ENCODE measurements at regions of chr11 and their contacts with region 1.

Region 1: DNA sequence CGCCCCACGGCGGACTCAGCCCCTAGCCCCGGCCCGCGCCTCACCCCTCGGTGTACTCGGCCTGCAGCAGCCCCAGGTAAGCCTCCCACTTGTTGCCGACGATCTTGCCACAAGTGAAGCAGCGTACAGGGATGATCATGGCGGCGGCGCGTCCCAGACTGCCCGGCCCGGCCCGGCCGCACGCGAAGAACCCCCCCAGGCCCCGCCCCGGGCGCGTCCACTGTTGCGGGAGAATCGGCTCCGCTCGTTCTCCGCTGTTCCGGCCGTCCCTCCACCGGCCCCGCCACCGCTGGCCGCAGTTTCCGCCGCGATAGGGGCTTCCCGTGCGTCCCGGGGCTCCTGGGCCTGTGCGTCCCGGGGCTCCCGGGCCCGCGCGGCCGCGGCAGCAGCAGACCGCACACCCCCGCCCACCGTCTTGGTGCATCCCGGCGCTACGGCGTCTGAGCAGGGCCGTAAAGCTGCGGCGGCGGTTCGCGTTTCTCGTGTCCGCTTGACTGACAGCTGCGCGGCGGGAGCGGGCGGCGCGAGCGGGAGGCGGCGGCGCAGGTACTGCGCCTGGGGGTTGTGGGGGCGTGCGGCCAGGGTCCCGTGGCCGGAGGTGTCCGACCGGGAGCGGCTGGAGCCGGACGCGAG is at the starts of genes POLR2L and TSPAN4:
- DNase-seq: peak; percentile 94
- ATAC-seq: peak; percentile 80
- H3K4me3 Mint-ChIP-seq: peak within 1 kb of the TSS; percentile 84
- H3K27ac Mint-ChIP-seq: peak within 1 kb of the TSS; percentile 87
- H3K4me1 Mint-ChIP-seq: peaks cover 22% of the 10 kb centered on the region
- H3K27me3 Mint-ChIP-seq: peaks cover 4% of the 10 kb centered on the region
- total RNA-seq, gene POLR2L: 74.6 to 79.4 TPM
- total RNA-seq, gene TSPAN4: 5.2 to 6.0 TPM

Region 2: DNA sequence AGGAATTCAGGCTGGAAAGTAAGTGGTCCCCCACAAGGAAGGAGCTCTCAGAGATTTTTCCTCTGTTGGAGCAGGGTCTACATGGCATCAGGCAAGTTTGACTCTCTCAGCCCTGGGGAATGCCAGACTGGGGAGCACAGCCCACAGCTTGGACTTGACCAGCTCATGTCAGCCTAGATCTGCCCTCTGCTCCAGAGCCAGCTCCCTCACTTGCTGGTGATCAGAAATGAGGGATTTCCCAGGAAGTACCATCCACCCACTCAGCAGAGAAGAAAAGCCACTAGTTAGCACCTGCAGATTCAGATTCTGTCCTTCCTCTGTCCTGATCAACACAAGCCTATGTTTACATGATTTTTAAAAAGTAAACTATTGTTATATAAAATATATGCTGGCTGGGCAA is 82.2 kb before region 1 on chr11:
- CTCF ChIA-PET with region 1: no interaction called
- POLR2A ChIA-PET with region 1: no interaction called
- intact Hi-C with region 1: no loop called
- DNase-seq: no peak
- ATAC-seq: no peak
- H3K4me3 Mint-ChIP-seq: no peak overlapping the region
- H3K27ac Mint-ChIP-seq: no peak overlapping the region
- H3K4me1 Mint-ChIP-seq: peaks cover 7% of the 10 kb centered on the region
- H3K27me3 Mint-ChIP-seq: no peaks in the 10 kb centered on the region

Region 3: GRCh38 chr11:777288-778255 is 64.9 kb before region 1 on chr11 and contains the start of gene GATD1:
- CTCF ChIA-PET with region 1: no interaction called
- POLR2A ChIA-PET with region 1: no interaction called
- intact Hi-C with region 1: loop called in 1 of 2 experiments (anchors 1 kb)
- DNase-seq: peak; percentile 97
- ATAC-seq: peak; percentile 91
- H3K4me3 Mint-ChIP-seq: peak within 1 kb of the TSS; percentile 89
- H3K27ac Mint-ChIP-seq: peak within 1 kb of the TSS; percentile 82
- H3K4me1 Mint-ChIP-seq: peaks cover 20% of the 10 kb centered on the region
- H3K27me3 Mint-ChIP-seq: no peaks in the 10 kb centered on the region
- total RNA-seq, gene GATD1: 45.7 to 59.8 TPM

Region 4: GRCh38 chr11:809287-810039 is 33.0 kb before region 1 on chr11 and contains the start of gene RPLP2:
- CTCF ChIA-PET with region 1: interaction called, 3 read pairs
- POLR2A ChIA-PET with region 1: no interaction called
- intact Hi-C with region 1: loop called (anchors 1 to 2 kb)
- DNase-seq: peak; percentile 99
- ATAC-seq: peak; percentile 86
- H3K4me3 Mint-ChIP-seq: peak within 1 kb of the TSS; percentile 94
- H3K27ac Mint-ChIP-seq: peak within 1 kb of the TSS; percentile 97
- H3K4me1 Mint-ChIP-seq: peaks cover 30% of the 10 kb centered on the region
- H3K27me3 Mint-ChIP-seq: no peaks in the 10 kb centered on the region
- total RNA-seq, gene RPLP2: 2,132 to 3,230 TPM

Region 5: DNA sequence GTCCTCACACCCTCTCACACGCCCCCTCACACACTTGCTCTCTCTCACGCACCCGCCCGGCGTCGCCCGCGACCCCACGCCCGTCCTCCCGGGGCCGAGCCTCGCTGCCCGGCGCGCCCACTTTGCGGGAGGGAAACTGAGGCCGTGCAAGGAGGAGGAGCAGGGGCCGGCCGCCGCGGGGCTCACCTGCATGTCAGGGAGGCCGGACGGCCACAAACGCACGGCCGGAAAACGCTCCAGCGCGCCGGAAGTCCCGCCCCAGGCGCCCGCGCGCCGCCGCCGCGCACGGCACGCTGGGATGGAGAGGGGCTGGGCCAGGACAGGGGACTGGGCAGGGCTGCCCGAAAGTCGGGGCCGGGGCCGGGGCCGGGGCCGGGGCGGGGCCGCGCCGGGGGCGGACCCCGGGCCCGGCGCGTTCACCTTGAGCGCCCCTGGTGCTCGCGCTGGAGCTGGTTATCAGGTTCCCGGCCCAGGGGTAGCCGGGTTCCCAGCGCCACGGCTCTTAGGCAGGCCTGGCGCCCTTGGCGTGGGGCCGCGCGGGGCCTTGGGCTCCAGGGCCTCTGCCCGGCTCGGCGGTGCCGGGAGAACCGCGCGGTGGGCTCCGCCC is 68.2 kb after region 1 on chr11 and contains the start of gene CHID1:
- CTCF ChIA-PET with region 1: no interaction called
- POLR2A ChIA-PET with region 1: no interaction called
- intact Hi-C with region 1: loop called (anchors 1 to 5 kb)
- DNase-seq: peak; percentile 92
- ATAC-seq: peak; percentile 98
- H3K4me3 Mint-ChIP-seq: peak within 1 kb of the TSS; percentile 88
- H3K27ac Mint-ChIP-seq: peak within 1 kb of the TSS; percentile 88
- H3K4me1 Mint-ChIP-seq: peaks cover 24% of the 10 kb centered on the region
- H3K27me3 Mint-ChIP-seq: no peaks in the 10 kb centered on the region
- total RNA-seq, gene CHID1: 60.4 to 75.3 TPM

Region 6: GRCh38 chr11:1389103-1389931 is 546.8 kb after region 1 on chr11:
- CTCF ChIA-PET with region 1: no interaction called
- POLR2A ChIA-PET with region 1: no interaction called
- intact Hi-C with region 1: loop called in 1 of 2 experiments (anchors 10 kb)
- DNase-seq: peak; percentile 99
- ATAC-seq: peak; percentile 99
- H3K4me3 Mint-ChIP-seq: peak overlapping the region; percentile 53
- H3K27ac Mint-ChIP-seq: no peak overlapping the region
- H3K4me1 Mint-ChIP-seq: peaks cover 9% of the 10 kb centered on the region
- H3K27me3 Mint-ChIP-seq: peaks cover 25% of the 10 kb centered on the region

Region 7: DNA sequence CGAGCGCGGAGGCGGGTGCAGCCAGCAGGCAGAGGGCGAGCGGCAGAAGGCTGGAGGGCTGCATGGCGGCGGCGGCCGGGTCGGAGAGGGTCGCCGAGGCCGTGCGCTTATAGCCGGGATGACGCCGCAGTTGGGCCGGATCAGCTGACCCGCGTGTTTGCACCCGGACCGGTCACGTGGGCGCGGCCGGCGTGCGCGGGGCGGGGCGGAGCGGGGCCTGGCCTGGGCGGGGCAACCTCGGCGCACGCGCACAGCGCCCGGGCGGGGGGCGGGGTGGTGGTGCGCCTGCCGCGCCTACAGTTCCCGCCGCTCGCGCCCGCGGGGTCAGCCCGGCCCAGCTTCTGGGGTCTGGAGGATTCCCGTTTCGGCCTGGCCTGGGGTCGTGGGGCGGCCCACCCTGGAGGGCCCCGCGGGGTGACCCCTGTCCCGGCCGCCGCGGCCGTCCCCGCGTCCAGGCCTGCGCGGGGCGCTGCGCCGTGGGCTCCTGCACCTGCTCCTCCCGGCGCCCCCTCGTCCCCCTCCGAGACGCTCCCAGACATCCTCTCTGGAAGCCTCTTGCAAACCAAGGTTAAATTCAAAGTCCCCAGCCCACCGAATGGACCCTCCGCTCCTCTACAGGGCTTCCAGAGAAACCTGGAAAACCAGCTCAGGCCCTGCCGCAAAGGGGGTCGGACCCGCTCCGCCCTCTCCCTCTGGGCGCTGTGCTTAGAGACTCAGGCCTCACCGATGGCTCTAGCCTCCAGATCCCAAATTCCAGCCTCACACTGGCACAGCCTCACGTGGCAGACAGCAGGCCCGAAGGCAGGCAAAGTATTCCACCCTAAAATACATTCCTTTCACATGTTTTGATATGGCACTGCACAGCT is 921.5 kb after region 1 on chr11 and contains the start of gene CTSD:
- CTCF ChIA-PET with region 1: no interaction called
- POLR2A ChIA-PET with region 1: no interaction called
- intact Hi-C with region 1: loop called in 1 of 2 experiments (anchors 10 kb)
- DNase-seq: peak; percentile 94
- ATAC-seq: peak; percentile 91
- H3K4me3 Mint-ChIP-seq: peak within 1 kb of the TSS; percentile 83
- H3K27ac Mint-ChIP-seq: peak within 1 kb of the TSS; percentile 58
- H3K4me1 Mint-ChIP-seq: peaks cover 35% of the 10 kb centered on the region
- H3K27me3 Mint-ChIP-seq: no peaks in the 10 kb centered on the region
- total RNA-seq, gene CTSD: 38.8 to 41.5 TPM

Measured in activated CD4-positive, alpha-beta T cell treated with anti-CD3 and anti-CD28 coated beads for 36 hours (primary cell).